PC-3 (cell line): ENCODE measurements at regions of chrX and their contacts with region 1.

Region 1: GRCh38 chrX:8815464-8816065 is 14.4 kb upstream of the FAM9A start:
- DNase-seq: peak; percentile 82
- ATAC-seq: peak; percentile 64
- H3K4me3 ChIP-seq: no peak overlapping the region
- H3K27ac ChIP-seq: no peak overlapping the region
- H3K4me1 ChIP-seq: no peaks in the 10 kb centered on the region
- H3K27me3 ChIP-seq: no peaks in the 10 kb centered on the region
- CTCF ChIP-seq: peak; percentile 80

Region 2: DNA sequence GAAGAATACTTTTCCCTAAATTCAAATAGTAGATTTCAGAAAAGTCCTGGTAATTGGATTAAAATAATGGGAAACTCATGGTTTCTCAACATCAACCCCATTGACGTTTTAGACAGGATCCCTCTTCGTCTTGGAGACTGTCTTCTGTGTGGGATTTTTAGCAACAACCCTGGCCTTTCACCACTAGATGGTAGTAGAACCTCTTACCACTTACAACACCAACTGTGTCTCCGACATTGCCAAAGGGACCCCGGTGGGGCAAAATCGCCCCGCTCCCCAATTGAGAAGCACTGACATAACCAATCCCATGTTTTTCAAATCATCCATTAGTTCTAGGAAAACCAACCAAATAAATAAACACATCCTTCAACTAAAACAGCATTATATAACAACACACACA is 66.7 kb before region 1 on chrX:
- CTCF ChIA-PET with region 1: interaction called, 3 read pairs
- POLR2A ChIA-PET with region 1: no interaction called
- intact Hi-C with region 1: loop called (anchors 1 kb)
- DNase-seq: peak; percentile 65
- ATAC-seq: peak; percentile 73
- H3K4me3 ChIP-seq: no peak overlapping the region
- H3K27ac ChIP-seq: no peak overlapping the region
- H3K4me1 ChIP-seq: no peaks in the 10 kb centered on the region
- H3K27me3 ChIP-seq: no peaks in the 10 kb centered on the region
- CTCF ChIP-seq: peak; percentile 77

Region 3: GRCh38 chrX:8868906-8869305 is 53.3 kb after region 1 on chrX:
- CTCF ChIA-PET with region 1: no interaction called
- POLR2A ChIA-PET with region 1: no interaction called
- intact Hi-C with region 1: loop called (anchors 2 kb)
- DNase-seq: peak; percentile 57
- ATAC-seq: peak; percentile 70
- H3K4me3 ChIP-seq: peak overlapping the region; percentile 57
- H3K27ac ChIP-seq: peak overlapping the region; percentile 100
- H3K4me1 ChIP-seq: peaks cover 44% of the 10 kb centered on the region
- H3K27me3 ChIP-seq: no peaks in the 10 kb centered on the region
- CTCF ChIP-seq: peak; percentile 64

Region 4: DNA sequence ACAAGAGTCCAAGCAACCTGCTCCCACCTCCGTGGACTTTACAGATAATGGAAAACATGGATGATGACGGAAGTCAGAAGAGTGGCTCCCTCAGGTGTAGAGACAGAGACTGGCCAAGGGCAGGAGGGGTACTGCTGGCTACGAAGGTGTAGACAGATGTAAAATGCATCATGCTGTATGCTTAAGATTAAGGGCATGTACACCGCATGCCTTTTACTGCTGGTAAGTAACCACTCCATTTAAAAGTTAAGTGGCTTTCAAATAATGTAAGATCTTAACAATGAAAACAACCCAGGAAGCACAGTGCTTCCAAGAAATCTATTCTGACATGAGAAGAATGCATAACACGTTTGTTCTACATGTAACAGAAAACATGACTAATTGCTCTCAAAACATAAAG is 295.2 kb after region 1 on chrX:
- CTCF ChIA-PET with region 1: no interaction called
- POLR2A ChIA-PET with region 1: no interaction called
- intact Hi-C with region 1: no loop called
- DNase-seq: no peak
- ATAC-seq: no peak
- H3K4me3 ChIP-seq: no peak overlapping the region
- H3K27ac ChIP-seq: no peak overlapping the region
- H3K4me1 ChIP-seq: peaks cover 11% of the 10 kb centered on the region; the same call in 1 of the 2 replicates
- H3K27me3 ChIP-seq: no peaks in the 10 kb centered on the region
- CTCF ChIP-seq: no peak

Region 5: DNA sequence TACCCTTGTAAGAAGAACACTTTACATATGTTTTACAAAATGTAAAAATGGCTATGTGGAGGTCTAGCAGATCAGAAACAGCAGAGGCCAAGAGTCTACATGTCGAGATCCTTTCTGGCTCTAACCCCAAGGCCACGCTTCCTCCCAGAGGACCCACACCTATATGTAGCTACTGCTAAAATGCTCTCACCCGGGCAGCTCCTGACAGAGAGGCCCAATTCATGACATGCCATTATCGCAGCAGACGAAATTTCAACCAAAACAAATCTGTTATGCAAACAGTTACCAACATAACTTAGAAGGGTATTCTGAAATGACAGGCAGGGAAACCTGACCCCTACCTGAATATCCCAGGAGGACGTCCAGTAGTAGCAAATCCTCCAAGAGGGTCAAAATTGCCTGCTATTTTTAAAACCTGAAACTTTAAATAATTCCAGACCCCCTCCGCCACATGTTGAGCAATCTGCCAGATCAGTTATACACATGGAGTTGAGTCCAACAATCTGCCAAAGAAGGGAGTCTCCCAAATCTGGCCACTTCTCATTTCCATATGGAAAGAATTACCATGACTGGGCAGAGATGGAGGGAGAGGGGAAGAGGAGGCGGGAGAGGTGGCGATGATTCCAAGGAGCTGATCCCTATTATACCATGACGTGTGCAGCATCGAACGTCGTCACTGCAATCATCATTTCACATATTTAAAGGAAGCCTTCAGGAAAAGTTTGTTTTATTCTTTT is 456.4 kb after region 1 on chrX:
- CTCF ChIA-PET with region 1: no interaction called
- POLR2A ChIA-PET with region 1: no interaction called
- intact Hi-C with region 1: no loop called
- DNase-seq: no peak
- ATAC-seq: no peak
- H3K4me3 ChIP-seq: no peak overlapping the region
- H3K27ac ChIP-seq: no peak overlapping the region
- H3K4me1 ChIP-seq: peaks cover 9% of the 10 kb centered on the region; the same call in 1 of the 2 replicates
- H3K27me3 ChIP-seq: no peaks in the 10 kb centered on the region
- CTCF ChIP-seq: no peak

Region 6: DNA sequence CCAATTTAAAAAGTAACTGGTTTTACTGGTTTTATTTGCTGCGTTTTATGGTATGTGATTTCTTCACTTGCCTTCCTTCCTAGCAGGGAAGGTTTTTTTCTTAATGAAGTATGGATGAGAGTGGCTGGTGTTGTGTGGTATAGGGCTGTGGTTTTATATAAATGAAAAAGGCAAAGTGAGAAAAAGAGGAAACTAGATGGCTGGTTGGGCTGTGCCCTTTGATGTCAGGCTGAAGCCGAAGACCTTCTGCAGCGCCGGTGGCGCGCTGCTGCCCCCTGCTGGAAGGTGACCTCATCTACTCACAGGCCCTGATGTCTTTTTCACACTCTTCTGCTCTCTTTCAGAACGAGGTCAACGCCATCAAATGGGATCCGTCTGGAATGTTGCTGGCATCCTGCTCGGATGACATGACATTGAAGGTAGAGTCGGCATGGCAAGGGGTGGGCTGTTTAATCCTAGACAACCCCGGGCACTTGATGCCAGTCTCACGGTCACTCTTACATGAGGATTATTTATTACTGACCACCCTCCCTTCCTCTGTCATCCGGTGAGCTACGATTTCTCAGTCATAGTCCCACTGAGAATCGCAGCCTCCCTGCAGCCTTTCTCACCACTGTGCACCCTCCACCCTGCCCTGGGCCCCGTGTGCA is 893.5 kb after region 1 on chrX:
- CTCF ChIA-PET with region 1: no interaction called
- POLR2A ChIA-PET with region 1: no interaction called
- intact Hi-C with region 1: loop called (anchors 2 kb)
- DNase-seq: peak; percentile 76
- ATAC-seq: peak; percentile 76
- H3K4me3 ChIP-seq: no peak overlapping the region
- H3K27ac ChIP-seq: 0 out of 2 replicates have a peak overlapping the region, but pooled peaks have one; percentile 20
- H3K4me1 ChIP-seq: peaks cover 11% of the 10 kb centered on the region
- H3K27me3 ChIP-seq: no peaks in the 10 kb centered on the region
- CTCF ChIP-seq: peak; percentile 85